G401 (cell line): ENCODE measurements at regions of chr17 and their contacts with region 1.

Region 1: DNA sequence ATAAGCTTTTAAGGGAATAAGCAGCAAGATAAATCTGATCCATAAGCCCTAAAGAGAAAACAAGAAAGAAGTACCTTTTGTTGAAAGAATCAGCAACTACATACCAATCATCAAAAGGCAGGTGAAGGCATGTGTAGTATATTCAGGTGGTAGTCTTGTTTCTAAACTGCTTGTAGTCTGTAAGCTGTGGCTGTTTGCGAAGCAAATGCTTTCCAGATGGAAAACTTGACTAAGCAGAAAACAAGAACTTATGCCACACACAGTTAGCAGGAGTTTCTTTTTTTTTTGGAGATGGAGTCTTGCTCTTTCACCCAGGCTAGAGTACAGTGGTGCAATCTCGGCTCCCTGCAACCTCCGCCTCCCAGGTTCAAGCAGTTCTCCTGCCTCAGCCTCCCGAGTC is 5.7 kb downstream of the CBX1 start:
- DNase-seq: no peak

Region 2: GRCh38 chr17:48030531-48030930 is 65.1 kb before region 1 on chr17:
- in situ Hi-C with region 1: loop called (anchors 5 kb)
- DNase-seq: no peak

Region 3: GRCh38 chr17:48153691-48154358 is 58.2 kb after region 1 on chr17:
- in situ Hi-C with region 1: no loop called
- DNase-seq: no peak